ENCODE measurements at regions of chr16 and their contacts with region 1.

Region 1: DNA sequence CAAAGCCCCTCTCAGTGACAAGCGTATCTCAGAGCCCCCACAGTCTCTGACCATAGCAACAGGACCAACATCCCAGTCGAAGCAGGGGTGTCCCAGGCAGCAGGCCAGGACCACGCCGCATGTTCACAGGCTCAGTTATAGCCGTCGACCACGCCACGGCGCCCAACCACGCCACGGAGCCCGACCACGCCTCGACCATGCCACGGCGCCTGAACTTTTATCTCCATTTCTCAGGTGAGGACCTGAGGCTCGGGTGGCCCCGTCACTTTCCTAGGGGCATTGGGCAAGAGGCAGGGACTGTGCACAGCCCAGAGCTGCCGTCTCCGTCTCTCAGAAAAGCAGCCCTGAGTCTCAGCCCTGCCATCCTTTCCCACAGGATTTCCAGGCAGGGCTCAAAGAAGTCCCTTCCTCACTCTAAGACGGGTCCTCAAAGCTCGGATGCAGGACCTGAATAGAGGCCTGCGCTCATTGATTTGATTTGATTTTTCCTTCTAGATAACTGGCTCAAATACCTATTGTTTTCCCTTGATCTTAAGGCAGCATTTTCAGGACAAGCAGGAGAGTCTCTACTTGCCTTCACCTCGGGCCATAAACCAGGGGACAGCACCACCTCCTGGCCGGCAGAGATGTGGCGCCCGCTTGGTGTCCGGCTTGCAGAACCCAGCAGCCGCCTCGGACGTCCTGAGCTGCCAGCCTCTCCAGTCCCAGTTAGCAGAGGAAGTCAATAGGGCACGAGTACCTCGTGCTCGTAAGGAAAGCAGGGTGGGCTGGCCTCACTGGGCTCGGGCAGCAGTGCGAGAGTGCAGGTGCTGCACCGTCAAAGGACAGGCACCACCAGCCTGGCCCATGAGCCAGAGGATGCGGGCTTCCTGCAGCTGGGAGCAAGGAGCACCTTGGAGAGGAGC is 38.7 kb downstream of the C16orf95 start:
- DNase-seq: peak; percentile 73 to 91 (median 90)
- ATAC-seq: peak; percentile 92 to 95
- H3K4me3 ChIP-seq: no peak overlapping the region
- H3K27ac ChIP-seq: no peak overlapping the region
- H3K4me1 ChIP-seq: no peaks in the 10 kb centered on the region
- H3K27me3 ChIP-seq: no peaks in the 10 kb centered on the region

Region 2: GRCh38 chr16:86563489-86564345 is 714.7 kb before region 1 on chr16:
- intact Hi-C with region 1: loop called (anchors 2 to 5 kb)
- DNase-seq: peak; percentile 85 to 95 (median 91)
- ATAC-seq: peak; percentile 67 to 76
- H3K4me3 ChIP-seq: no peak overlapping the region
- H3K27ac ChIP-seq: no peak overlapping the region
- H3K4me1 ChIP-seq: no peaks in the 10 kb centered on the region
- H3K27me3 ChIP-seq: no peaks in the 10 kb centered on the region

Region 3: DNA sequence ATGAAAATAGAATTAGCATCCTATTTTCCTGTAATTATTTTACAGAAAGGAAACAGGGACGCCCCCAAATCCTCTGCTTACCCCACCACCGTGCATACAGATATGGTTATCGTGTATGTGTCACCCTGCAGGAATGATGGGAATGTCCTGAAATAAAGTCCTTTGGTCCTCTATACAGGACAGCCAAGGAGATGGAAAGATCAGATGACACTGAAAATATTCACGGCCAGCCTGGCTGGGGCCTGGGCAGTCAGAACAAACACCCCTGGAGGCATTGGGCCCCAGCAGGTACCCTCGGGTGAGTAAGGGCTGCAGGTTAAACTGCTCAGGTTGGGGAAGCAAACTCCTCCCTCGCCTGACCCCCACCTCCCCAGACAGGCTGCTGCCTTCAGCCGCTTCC is 332.0 kb before region 1 on chr16:
- intact Hi-C with region 1: no loop called
- DNase-seq: no peak
- ATAC-seq: peak in 1 of 2 donors; percentile 12
- H3K4me3 ChIP-seq: no peak overlapping the region
- H3K27ac ChIP-seq: no peak overlapping the region
- H3K4me1 ChIP-seq: no peaks in the 10 kb centered on the region
- H3K27me3 ChIP-seq: no peaks in the 10 kb centered on the region

Region 4: GRCh38 chr16:87062569-87063442 is 215.6 kb before region 1 on chr16:
- intact Hi-C with region 1: loop called (anchors 5 to 10 kb)
- DNase-seq: peak; percentile 72 to 91 (median 88)
- ATAC-seq: peak; percentile 92
- H3K4me3 ChIP-seq: no peak overlapping the region
- H3K27ac ChIP-seq: no peak overlapping the region
- H3K4me1 ChIP-seq: no peaks in the 10 kb centered on the region
- H3K27me3 ChIP-seq: no peaks in the 10 kb centered on the region

Region 5: GRCh38 chr16:87067836-87068761 is 210.3 kb before region 1 on chr16:
- intact Hi-C with region 1: loop called (anchors 5 to 10 kb)
- DNase-seq: no peak
- ATAC-seq: no peak
- H3K4me3 ChIP-seq: no peak overlapping the region
- H3K27ac ChIP-seq: no peak overlapping the region
- H3K4me1 ChIP-seq: no peaks in the 10 kb centered on the region
- H3K27me3 ChIP-seq: no peaks in the 10 kb centered on the region

Region 6: GRCh38 chr16:87132491-87132961 is 145.9 kb before region 1 on chr16:
- intact Hi-C with region 1: no loop called
- DNase-seq: peak; percentile 60 to 87 (median 77)
- ATAC-seq: peak; percentile 63 to 89
- H3K4me3 ChIP-seq: no peak overlapping the region
- H3K27ac ChIP-seq: peak overlapping the region; percentile 6
- H3K4me1 ChIP-seq: no peaks in the 10 kb centered on the region
- H3K27me3 ChIP-seq: no peaks in the 10 kb centered on the region

Region 7: GRCh38 chr16:87203060-87203656 is 75.3 kb before region 1 on chr16:
- intact Hi-C with region 1: loop called in 1 of 4 experiments (anchors 5 kb)
- DNase-seq: peak; percentile 57 to 89 (median 85)
- ATAC-seq: peak; percentile 57 to 61
- H3K4me3 ChIP-seq: no peak overlapping the region
- H3K27ac ChIP-seq: no peak overlapping the region
- H3K4me1 ChIP-seq: peaks cover 3% of the 10 kb centered on the region
- H3K27me3 ChIP-seq: no peaks in the 10 kb centered on the region